ENCODE measurements at regions of chr20 and their contacts with region 1.

Region 1: GRCh38 chr20:32521780-32522525 is 63.2 kb downstream of the NOL4L start:
- DNase-seq: peak; percentile 70
- ATAC-seq: peak; percentile 60
- H3K4me3 ChIP-seq: no peak overlapping the region
- H3K4me3 Mint-ChIP-seq: no peak overlapping the region
- H3K27ac ChIP-seq: no peak overlapping the region
- H3K27ac Mint-ChIP-seq: peak overlapping the region; percentile 20
- H3K4me1 ChIP-seq: peaks cover 31 to 32% of the 10 kb centered on the region in 2 donors
- H3K4me1 Mint-ChIP-seq: peaks cover 42% of the 10 kb centered on the region
- H3K27me3 ChIP-seq: no peaks in the 10 kb centered on the region
- H3K27me3 Mint-ChIP-seq: no peaks in the 10 kb centered on the region
- CTCF ChIP-seq: peak; percentile 80

Region 2: GRCh38 chr20:32509639-32510066 is 12.3 kb before region 1 on chr20:
- CTCF ChIA-PET with region 1: interaction called, 13 read pairs
- POLR2A ChIA-PET with region 1: no interaction called
- intact Hi-C with region 1: no loop called
- DNase-seq: peak; percentile 58
- ATAC-seq: peak; percentile 89
- H3K4me3 ChIP-seq: no peak overlapping the region
- H3K4me3 Mint-ChIP-seq: peak overlapping the region; percentile 76
- H3K27ac ChIP-seq: no peak overlapping the region
- H3K27ac Mint-ChIP-seq: peak overlapping the region; percentile 86
- H3K4me1 ChIP-seq: peaks cover 33 to 34% of the 10 kb centered on the region in 2 donors
- H3K4me1 Mint-ChIP-seq: peaks cover 36% of the 10 kb centered on the region
- H3K27me3 ChIP-seq: no peaks in the 10 kb centered on the region
- H3K27me3 Mint-ChIP-seq: no peaks in the 10 kb centered on the region
- CTCF ChIP-seq: no peak

Region 3: DNA sequence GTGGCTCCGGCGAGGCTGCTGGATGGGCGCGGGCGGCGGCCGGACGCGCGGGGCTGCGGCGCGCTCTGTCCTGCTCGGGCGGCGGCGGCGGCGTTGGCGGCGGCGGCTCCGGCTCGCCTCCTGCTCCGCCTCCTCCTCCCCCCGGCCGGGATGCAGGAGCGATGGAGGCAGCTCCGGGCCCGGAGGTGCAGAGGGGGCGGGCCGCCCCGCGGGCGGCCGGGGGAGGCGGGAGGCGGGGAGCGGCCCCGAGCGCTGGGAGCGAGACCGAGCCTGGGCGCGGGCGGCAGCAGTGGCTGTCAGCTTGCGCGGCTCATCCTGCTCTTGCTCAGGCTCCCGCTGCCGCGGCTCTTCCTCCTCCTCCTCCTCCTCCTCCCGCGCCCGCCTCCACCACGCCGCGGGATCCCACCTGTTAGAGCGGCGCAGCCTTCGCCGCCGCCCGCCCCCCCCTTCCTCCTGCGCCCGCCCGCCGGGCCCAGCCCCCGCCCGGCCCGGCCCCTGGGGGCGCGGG is 63.1 kb after region 1 on chr20 and contains the start of gene NOL4L:
- CTCF ChIA-PET with region 1: interaction called, 5 read pairs
- POLR2A ChIA-PET with region 1: no interaction called
- intact Hi-C with region 1: loop called (anchors 2 kb)
- DNase-seq: peak; percentile 45
- ATAC-seq: peak; percentile 16
- H3K4me3 ChIP-seq: peak within 1 kb of the TSS; percentile 41 to 70 (median 61)
- H3K4me3 Mint-ChIP-seq: peak within 1 kb of the TSS; percentile 87
- H3K27ac ChIP-seq: no peak within 1 kb of the TSS
- H3K27ac Mint-ChIP-seq: peak within 1 kb of the TSS; percentile 85
- H3K4me1 ChIP-seq: peaks cover 29 to 40% of the 10 kb centered on the region in 2 donors
- H3K4me1 Mint-ChIP-seq: peaks cover 30% of the 10 kb centered on the region
- H3K27me3 ChIP-seq: peaks cover 0 to 10% (median 5%) of the 10 kb centered on the region in 4 experiments
- H3K27me3 Mint-ChIP-seq: peaks cover 4% of the 10 kb centered on the region
- CTCF ChIP-seq: no peak
- total RNA-seq, gene NOL4L: 6.5 and 7.6 TPM in 2 replicates

Region 4: GRCh38 chr20:32626859-32627636 is 105.1 kb after region 1 on chr20:
- CTCF ChIA-PET with region 1: interaction called, 11 read pairs
- POLR2A ChIA-PET with region 1: no interaction called
- intact Hi-C with region 1: no loop called
- DNase-seq: peak; percentile 42
- ATAC-seq: peak; percentile 46
- H3K4me3 ChIP-seq: peak overlapping the region in 4 of 5 experiments; percentile 6 to 44 (median 18)
- H3K4me3 Mint-ChIP-seq: peak overlapping the region; percentile 74
- H3K27ac ChIP-seq: peak overlapping the region in 1 of 2 donors; percentile 23
- H3K27ac Mint-ChIP-seq: peak overlapping the region; percentile 32
- H3K4me1 ChIP-seq: peaks cover 19% of the 10 kb centered on the region in 2 donors
- H3K4me1 Mint-ChIP-seq: peaks cover 11% of the 10 kb centered on the region
- H3K27me3 ChIP-seq: peaks cover 0 to 5% (median 2%) of the 10 kb centered on the region in 4 experiments
- H3K27me3 Mint-ChIP-seq: no peaks in the 10 kb centered on the region
- CTCF ChIP-seq: no peak

Region 5: GRCh38 chr20:32652739-32653526 is 131.0 kb after region 1 on chr20:
- CTCF ChIA-PET with region 1: interaction called, 313 read pairs
- POLR2A ChIA-PET with region 1: interaction called, 6 read pairs
- intact Hi-C with region 1: no loop called
- DNase-seq: peak; percentile 84
- ATAC-seq: peak; percentile 96
- H3K4me3 ChIP-seq: no peak overlapping the region
- H3K4me3 Mint-ChIP-seq: no peak overlapping the region
- H3K27ac ChIP-seq: no peak overlapping the region
- H3K27ac Mint-ChIP-seq: no peak overlapping the region
- H3K4me1 ChIP-seq: peaks cover 4 to 7% of the 10 kb centered on the region in 2 donors
- H3K4me1 Mint-ChIP-seq: peaks cover 9% of the 10 kb centered on the region
- H3K27me3 ChIP-seq: peaks cover 0 to 4% (median 0%) of the 10 kb centered on the region in 4 experiments
- H3K27me3 Mint-ChIP-seq: peaks cover 5% of the 10 kb centered on the region
- CTCF ChIP-seq: peak; percentile 97

Region 6: DNA sequence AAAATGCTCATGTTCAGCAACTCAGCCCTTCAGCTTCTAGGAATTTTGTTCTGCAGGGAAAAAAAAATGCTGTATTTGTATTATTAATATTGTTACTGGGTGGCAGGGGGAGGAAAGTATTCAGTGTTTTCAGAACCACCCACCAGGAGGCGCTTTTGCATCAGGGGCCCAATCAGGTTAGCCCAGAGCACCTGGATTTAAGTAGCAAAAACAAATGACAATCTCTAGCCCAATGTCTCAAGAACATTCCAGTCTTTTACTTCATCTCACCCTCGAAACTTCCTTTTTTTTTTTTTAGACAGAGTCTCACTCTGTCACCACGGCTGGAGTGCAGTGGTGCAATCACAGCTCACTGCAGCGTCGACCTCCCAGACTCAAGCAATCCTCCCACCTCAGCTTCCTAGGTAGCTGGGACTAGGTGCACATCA is 152.4 kb after region 1 on chr20:
- CTCF ChIA-PET with region 1: interaction called, 23 read pairs
- POLR2A ChIA-PET with region 1: no interaction called
- intact Hi-C with region 1: no loop called
- DNase-seq: peak; percentile 58
- ATAC-seq: no peak
- H3K4me3 ChIP-seq: no peak overlapping the region
- H3K4me3 Mint-ChIP-seq: peak overlapping the region; percentile 0
- H3K27ac ChIP-seq: no peak overlapping the region
- H3K27ac Mint-ChIP-seq: no peak overlapping the region
- H3K4me1 ChIP-seq: peaks cover 23 to 26% of the 10 kb centered on the region in 2 donors
- H3K4me1 Mint-ChIP-seq: peaks cover 36% of the 10 kb centered on the region
- H3K27me3 ChIP-seq: no peaks in the 10 kb centered on the region
- H3K27me3 Mint-ChIP-seq: no peaks in the 10 kb centered on the region
- CTCF ChIP-seq: peak; percentile 72

Region 7: DNA sequence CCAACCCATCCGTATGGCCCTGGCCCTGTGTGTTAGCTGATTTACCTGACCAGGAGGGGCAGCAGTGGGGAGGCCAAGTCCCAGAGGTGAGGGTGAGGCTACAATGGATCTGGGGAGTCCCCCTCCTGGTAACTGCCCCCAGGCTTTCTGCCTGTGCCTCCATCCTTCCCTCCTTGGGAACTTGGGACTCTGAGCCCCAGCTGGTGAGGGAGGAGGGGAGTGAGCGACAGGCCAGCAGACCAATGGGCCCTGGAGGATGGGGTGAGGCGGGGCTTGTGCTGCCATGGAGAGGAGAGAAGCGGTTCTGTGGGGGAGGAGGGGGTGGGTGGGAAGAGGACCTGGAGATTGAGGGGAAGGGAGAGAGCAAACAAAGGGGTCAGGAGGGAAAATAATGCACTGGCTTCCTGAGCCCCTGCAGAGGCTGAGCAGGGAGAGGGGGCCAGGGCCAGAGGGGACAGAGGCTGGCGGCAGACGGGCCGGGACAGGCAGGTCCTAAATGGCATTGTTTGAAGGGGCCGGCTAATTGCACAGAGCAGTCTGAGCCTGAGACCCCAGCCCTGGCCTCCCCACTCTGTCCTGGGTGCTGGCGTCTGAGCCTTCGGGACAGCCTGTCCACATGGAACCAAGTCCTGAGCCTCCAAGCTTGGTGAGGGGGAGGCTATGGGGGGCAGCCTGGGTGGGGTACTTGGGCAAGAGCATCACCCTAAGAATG is 257.7 kb after region 1 on chr20:
- CTCF ChIA-PET with region 1: interaction called, 31 read pairs
- POLR2A ChIA-PET with region 1: no interaction called
- intact Hi-C with region 1: loop called (anchors 5 kb)
- DNase-seq: no peak
- ATAC-seq: no peak
- H3K4me3 ChIP-seq: no peak overlapping the region
- H3K4me3 Mint-ChIP-seq: no peak overlapping the region
- H3K27ac ChIP-seq: no peak overlapping the region
- H3K27ac Mint-ChIP-seq: no peak overlapping the region
- H3K4me1 ChIP-seq: no peaks in the 10 kb centered on the region
- H3K4me1 Mint-ChIP-seq: peaks cover 2% of the 10 kb centered on the region
- H3K27me3 ChIP-seq: no peaks in the 10 kb centered on the region
- H3K27me3 Mint-ChIP-seq: no peaks in the 10 kb centered on the region
- CTCF ChIP-seq: no peak

Measured in B cell (primary cell).